Caco-2 (cell line): ENCODE measurements at regions of chr6 and their contacts with region 1.

Region 1: GRCh38 chr6:42118162-42119001 is 24.0 kb downstream of the C6orf132 start:
- DNase-seq: peak; percentile 64 to 81
- H3K4me3 ChIP-seq: no peak overlapping the region
- H3K4me3 Mint-ChIP-seq: no peak overlapping the region
- H3K27ac Mint-ChIP-seq: peak overlapping the region; percentile 25
- H3K4me1 ChIP-seq: peaks cover 25% of the 10 kb centered on the region
- H3K4me1 Mint-ChIP-seq: peaks cover 15% of the 10 kb centered on the region
- H3K27me3 ChIP-seq: no peaks in the 10 kb centered on the region
- H3K27me3 Mint-ChIP-seq: no peaks in the 10 kb centered on the region
- CTCF ChIP-seq: no peak

Region 2: GRCh38 chr6:42050266-42051032 is 67.9 kb before region 1 on chr6 and contains the start of gene TAF8:
- CTCF ChIA-PET with region 1: no interaction called
- POLR2A ChIA-PET with region 1: no interaction called
- intact Hi-C with region 1: loop called (anchors 2 kb)
- DNase-seq: peak; percentile 92 to 93
- H3K4me3 ChIP-seq: peak within 1 kb of the TSS; percentile 71
- H3K4me3 Mint-ChIP-seq: peak within 1 kb of the TSS; percentile 95
- H3K27ac Mint-ChIP-seq: peak within 1 kb of the TSS; percentile 98
- H3K4me1 ChIP-seq: peaks cover 14% of the 10 kb centered on the region; the same call in 1 of the 2 replicates
- H3K4me1 Mint-ChIP-seq: no peaks in the 10 kb centered on the region
- H3K27me3 ChIP-seq: no peaks in the 10 kb centered on the region
- H3K27me3 Mint-ChIP-seq: no peaks in the 10 kb centered on the region
- CTCF ChIP-seq: no peak
- total RNA-seq, gene TAF8: 35.0 and 37.7 TPM in 2 replicates

Region 3: GRCh38 chr6:42084889-42085288 is 33.5 kb before region 1 on chr6:
- CTCF ChIA-PET with region 1: no interaction called
- POLR2A ChIA-PET with region 1: interaction called, 11 read pairs
- intact Hi-C with region 1: no loop called
- DNase-seq: no peak
- H3K4me3 ChIP-seq: no peak overlapping the region
- H3K4me3 Mint-ChIP-seq: no peak overlapping the region
- H3K27ac Mint-ChIP-seq: no peak overlapping the region
- H3K4me1 ChIP-seq: peaks cover 12% of the 10 kb centered on the region
- H3K4me1 Mint-ChIP-seq: no peaks in the 10 kb centered on the region
- H3K27me3 ChIP-seq: no peaks in the 10 kb centered on the region
- H3K27me3 Mint-ChIP-seq: no peaks in the 10 kb centered on the region
- CTCF ChIP-seq: no peak

Region 4: GRCh38 chr6:42129069-42129676 is 10.8 kb after region 1 on chr6:
- CTCF ChIA-PET with region 1: no interaction called
- POLR2A ChIA-PET with region 1: interaction called, 19 read pairs
- intact Hi-C with region 1: no loop called
- DNase-seq: no peak
- H3K4me3 ChIP-seq: no peak overlapping the region
- H3K4me3 Mint-ChIP-seq: no peak overlapping the region
- H3K27ac Mint-ChIP-seq: no peak overlapping the region
- H3K4me1 ChIP-seq: peaks cover 1% of the 10 kb centered on the region; the same call in 1 of the 2 replicates
- H3K4me1 Mint-ChIP-seq: no peaks in the 10 kb centered on the region
- H3K27me3 ChIP-seq: no peaks in the 10 kb centered on the region
- H3K27me3 Mint-ChIP-seq: no peaks in the 10 kb centered on the region
- CTCF ChIP-seq: peak in 1 of 2 experiments; percentile 6

Region 5: GRCh38 chr6:42136508-42137193 is 18.3 kb after region 1 on chr6:
- CTCF ChIA-PET with region 1: interaction called, 3 read pairs
- POLR2A ChIA-PET with region 1: interaction called, 19 read pairs
- intact Hi-C with region 1: loop called (anchors 2 kb)
- DNase-seq: peak; percentile 60 to 70
- H3K4me3 ChIP-seq: no peak overlapping the region
- H3K4me3 Mint-ChIP-seq: peak overlapping the region; percentile 67
- H3K27ac Mint-ChIP-seq: peak overlapping the region; percentile 95
- H3K4me1 ChIP-seq: peaks cover 55% of the 10 kb centered on the region
- H3K4me1 Mint-ChIP-seq: peaks cover 37% of the 10 kb centered on the region
- H3K27me3 ChIP-seq: no peaks in the 10 kb centered on the region
- H3K27me3 Mint-ChIP-seq: no peaks in the 10 kb centered on the region
- CTCF ChIP-seq: peak; percentile 42 to 51

Region 6: DNA sequence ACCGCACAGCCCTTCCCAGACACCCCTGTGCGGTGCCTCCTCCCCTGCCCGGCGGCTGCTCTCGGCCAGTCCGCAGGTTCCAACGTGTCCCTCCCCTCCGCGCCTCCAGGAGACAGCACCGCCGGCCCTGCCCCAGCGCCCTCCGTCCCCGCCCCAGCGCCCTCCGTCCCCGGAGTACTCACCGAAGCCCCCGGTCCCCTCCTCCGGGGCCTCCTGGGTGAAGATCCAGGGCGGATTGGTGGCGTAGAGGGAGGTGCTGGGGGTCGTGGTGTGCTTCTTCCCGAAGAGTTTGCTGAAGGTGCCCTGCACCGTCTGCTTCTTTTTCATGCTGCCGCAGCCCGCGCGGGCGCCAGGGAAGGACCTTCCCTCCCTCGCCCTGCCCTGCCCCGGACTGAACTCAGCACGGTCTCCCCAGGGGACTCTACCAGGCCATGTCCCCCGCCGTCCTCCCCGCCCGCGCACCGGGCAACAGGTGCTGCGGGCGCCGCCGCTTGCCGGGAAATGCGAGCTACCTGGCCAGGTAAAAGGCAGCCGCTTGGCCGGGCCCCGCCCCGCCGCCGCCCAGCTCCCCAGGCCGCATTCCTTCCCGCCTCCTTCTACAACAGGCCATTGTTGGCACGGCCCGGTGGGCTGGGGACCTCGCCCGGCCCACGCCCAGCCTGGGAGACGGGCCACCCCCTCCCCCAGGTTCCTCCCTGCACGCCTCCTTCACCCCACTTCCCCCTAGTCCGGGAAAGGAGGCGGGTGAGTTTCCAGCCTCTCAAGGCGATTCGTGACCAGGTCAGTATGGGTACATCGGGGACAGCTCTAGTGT is 23.9 kb after region 1 on chr6 and contains the start of gene C6orf132:
- CTCF ChIA-PET with region 1: interaction called, 3 read pairs
- POLR2A ChIA-PET with region 1: interaction called, 19 read pairs
- intact Hi-C with region 1: loop called (anchors 2 kb)
- DNase-seq: peak; percentile 90
- H3K4me3 ChIP-seq: peak within 1 kb of the TSS; percentile 82
- H3K4me3 Mint-ChIP-seq: peak within 1 kb of the TSS; percentile 78
- H3K27ac Mint-ChIP-seq: peak within 1 kb of the TSS; percentile 95
- H3K4me1 ChIP-seq: peaks cover 44% of the 10 kb centered on the region
- H3K4me1 Mint-ChIP-seq: peaks cover 34% of the 10 kb centered on the region
- H3K27me3 ChIP-seq: no peaks in the 10 kb centered on the region
- H3K27me3 Mint-ChIP-seq: no peaks in the 10 kb centered on the region
- CTCF ChIP-seq: peak in 1 of 2 experiments; percentile 13
- total RNA-seq, gene C6orf132: 56.2 and 61.2 TPM in 2 replicates

Region 7: DNA sequence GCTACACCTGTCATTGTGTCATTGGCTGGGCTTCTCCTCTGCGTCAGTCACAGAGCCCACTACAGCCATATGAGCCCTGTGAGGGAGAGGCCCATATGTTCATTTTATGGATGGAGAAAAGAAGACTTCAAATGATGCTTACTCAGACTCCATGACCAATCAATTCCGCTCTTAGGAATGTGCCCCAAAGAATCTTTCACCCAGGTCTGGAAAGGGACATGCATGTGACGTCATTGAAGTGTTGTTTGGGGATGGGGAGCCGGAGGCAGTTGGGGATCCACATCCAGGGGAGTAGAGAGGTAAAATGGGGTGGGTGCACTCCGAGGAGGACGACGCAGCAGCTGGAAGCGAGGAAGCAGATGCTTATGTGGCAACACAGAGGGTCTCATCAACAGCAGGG is 33.6 kb after region 1 on chr6:
- CTCF ChIA-PET with region 1: no interaction called
- POLR2A ChIA-PET with region 1: interaction called, 12 read pairs
- intact Hi-C with region 1: no loop called
- DNase-seq: no peak
- H3K4me3 ChIP-seq: no peak overlapping the region
- H3K4me3 Mint-ChIP-seq: no peak overlapping the region
- H3K27ac Mint-ChIP-seq: no peak overlapping the region
- H3K4me1 ChIP-seq: peaks cover 17% of the 10 kb centered on the region
- H3K4me1 Mint-ChIP-seq: peaks cover 6% of the 10 kb centered on the region
- H3K27me3 ChIP-seq: no peaks in the 10 kb centered on the region
- H3K27me3 Mint-ChIP-seq: no peaks in the 10 kb centered on the region
- CTCF ChIP-seq: no peak